PC-3 (cell line): ENCODE measurements at regions of chr3 and their contacts with region 1.

Region 1: GRCh38 chr3:143443851-143444331 is 324.3 kb downstream of the CHST2 start:
- DNase-seq: peak; percentile 94
- ATAC-seq: peak; percentile 99
- H3K4me3 ChIP-seq: peak overlapping the region; percentile 22; the same call in 1 of the 2 replicates
- H3K27ac ChIP-seq: peak overlapping the region; percentile 92
- H3K4me1 ChIP-seq: peaks cover 26% of the 10 kb centered on the region
- H3K27me3 ChIP-seq: no peaks in the 10 kb centered on the region
- CTCF ChIP-seq: no peak

Region 2: DNA sequence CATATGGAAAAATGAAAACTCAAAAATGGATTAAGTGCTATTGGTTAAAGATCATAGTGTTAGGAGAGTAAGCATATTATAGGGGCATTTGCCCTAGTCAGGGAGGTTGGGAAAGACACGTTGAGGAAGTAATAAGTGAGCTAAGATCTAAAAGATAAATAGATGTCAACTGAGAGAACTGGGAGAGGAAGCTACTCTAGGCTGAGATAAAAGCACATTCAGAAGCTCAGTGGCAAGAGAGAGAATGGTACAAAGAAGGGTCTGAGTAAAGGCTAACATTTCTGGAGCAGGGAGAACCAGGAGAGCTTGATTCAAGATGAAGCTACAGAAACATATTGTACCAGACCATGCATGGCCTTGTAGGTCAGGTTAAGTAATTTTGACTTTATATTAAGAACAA is 656.2 kb before region 1 on chr3:
- CTCF ChIA-PET with region 1: no interaction called
- POLR2A ChIA-PET with region 1: no interaction called
- intact Hi-C with region 1: no loop called
- DNase-seq: no peak
- ATAC-seq: no peak
- H3K4me3 ChIP-seq: no peak overlapping the region
- H3K27ac ChIP-seq: no peak overlapping the region
- H3K4me1 ChIP-seq: peaks cover 5% of the 10 kb centered on the region; the same call in 1 of the 2 replicates
- H3K27me3 ChIP-seq: no peaks in the 10 kb centered on the region
- CTCF ChIP-seq: no peak

Region 3: GRCh38 chr3:143135150-143135549 is 308.7 kb before region 1 on chr3:
- CTCF ChIA-PET with region 1: no interaction called
- POLR2A ChIA-PET with region 1: no interaction called
- intact Hi-C with region 1: loop called (anchors 5 kb)
- DNase-seq: peak; percentile 87
- ATAC-seq: peak; percentile 90
- H3K4me3 ChIP-seq: no peak overlapping the region
- H3K27ac ChIP-seq: peak overlapping the region; percentile 36
- H3K4me1 ChIP-seq: peaks cover 27% of the 10 kb centered on the region
- H3K27me3 ChIP-seq: no peaks in the 10 kb centered on the region
- CTCF ChIP-seq: 0 out of 2 replicates have a peak, but pooled peaks have one; percentile 14

Region 4: DNA sequence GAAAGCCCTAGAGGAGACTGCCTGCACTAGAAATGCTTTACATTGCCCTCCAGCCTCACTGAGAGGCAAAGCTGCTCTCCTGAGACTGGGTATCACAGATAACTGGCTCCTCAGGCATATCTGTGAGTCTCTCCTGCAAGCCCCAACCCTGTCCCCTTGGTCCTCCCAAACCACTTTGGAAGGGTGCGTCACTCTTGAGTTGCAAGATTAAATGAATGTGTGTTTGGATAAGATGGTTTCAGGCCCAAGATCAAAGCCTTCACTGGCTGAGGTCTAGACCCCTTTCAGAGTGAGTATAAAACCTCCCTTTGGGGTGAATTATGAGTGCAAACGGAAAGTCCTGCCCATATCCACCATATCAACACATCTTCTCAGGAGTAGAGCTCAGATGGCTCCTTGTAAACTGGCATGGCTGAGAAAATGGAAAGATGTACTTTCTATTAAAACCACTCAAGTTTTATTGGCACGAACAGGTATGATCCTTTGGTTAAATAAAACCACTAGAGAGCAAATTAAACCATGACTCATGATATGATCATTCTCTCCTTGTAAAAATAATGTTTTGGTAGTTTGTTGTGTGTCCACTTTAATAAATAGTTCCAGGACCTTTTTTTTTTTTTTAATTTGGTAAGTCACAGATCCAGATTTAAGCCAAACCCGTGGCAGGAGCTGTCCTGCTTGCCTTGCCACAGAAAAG is 160.3 kb before region 1 on chr3:
- CTCF ChIA-PET with region 1: no interaction called
- POLR2A ChIA-PET with region 1: interaction called, 19 read pairs
- intact Hi-C with region 1: no loop called
- DNase-seq: peak; percentile 89
- ATAC-seq: peak; percentile 91
- H3K4me3 ChIP-seq: no peak overlapping the region
- H3K27ac ChIP-seq: peak overlapping the region; percentile 67
- H3K4me1 ChIP-seq: peaks cover 16% of the 10 kb centered on the region
- H3K27me3 ChIP-seq: no peaks in the 10 kb centered on the region
- CTCF ChIP-seq: no peak

Region 5: GRCh38 chr3:143329567-143330211 is 114.2 kb before region 1 on chr3:
- CTCF ChIA-PET with region 1: no interaction called
- POLR2A ChIA-PET with region 1: no interaction called
- intact Hi-C with region 1: loop called (anchors 5 kb)
- DNase-seq: no peak
- ATAC-seq: no peak
- H3K4me3 ChIP-seq: no peak overlapping the region
- H3K27ac ChIP-seq: no peak overlapping the region
- H3K4me1 ChIP-seq: peaks cover 33% of the 10 kb centered on the region
- H3K27me3 ChIP-seq: no peaks in the 10 kb centered on the region
- CTCF ChIP-seq: no peak

Region 6: DNA sequence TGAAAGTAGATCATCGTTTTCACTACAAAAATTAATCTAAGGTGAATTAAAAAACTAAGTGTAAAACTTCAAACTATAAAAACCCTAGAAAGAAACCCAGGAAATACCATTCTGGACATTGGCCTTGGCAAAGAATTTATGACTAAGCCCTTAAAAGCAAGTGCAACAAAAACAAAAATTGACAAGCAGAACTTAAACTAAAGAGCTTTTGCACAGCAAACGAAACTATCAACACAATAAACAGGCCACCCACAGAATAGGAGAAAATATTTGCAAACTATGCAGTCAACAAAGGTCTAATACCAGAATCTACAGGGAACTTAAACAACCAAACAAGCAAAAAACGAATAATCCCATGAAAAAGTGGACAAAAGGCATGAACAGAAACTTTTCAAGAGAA is 22.3 kb before region 1 on chr3:
- CTCF ChIA-PET with region 1: no interaction called
- POLR2A ChIA-PET with region 1: no interaction called
- intact Hi-C with region 1: no loop called
- DNase-seq: no peak
- ATAC-seq: no peak
- H3K4me3 ChIP-seq: no peak overlapping the region
- H3K27ac ChIP-seq: no peak overlapping the region
- H3K4me1 ChIP-seq: no peaks in the 10 kb centered on the region
- H3K27me3 ChIP-seq: no peaks in the 10 kb centered on the region
- CTCF ChIP-seq: no peak

Region 7: DNA sequence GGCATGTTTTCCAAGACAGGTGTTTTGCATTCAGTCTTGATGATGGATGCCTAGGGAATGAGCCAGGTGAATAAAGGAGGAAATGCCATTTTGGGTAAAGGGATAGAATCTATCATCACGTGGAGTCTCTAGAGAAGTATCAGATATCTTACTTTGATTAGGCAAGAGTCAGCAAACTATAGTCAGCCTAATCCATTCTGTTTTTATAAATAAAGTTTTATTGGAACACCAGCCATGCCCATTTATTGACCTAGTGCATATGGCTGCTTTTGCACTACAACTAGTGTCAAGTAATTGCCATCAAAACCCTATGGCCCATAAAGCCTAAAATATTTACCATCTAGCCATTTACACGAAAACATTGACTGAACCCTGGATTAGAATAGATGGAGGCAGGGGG is 173.2 kb after region 1 on chr3:
- CTCF ChIA-PET with region 1: no interaction called
- POLR2A ChIA-PET with region 1: no interaction called
- intact Hi-C with region 1: no loop called
- DNase-seq: no peak
- ATAC-seq: no peak
- H3K4me3 ChIP-seq: no peak overlapping the region
- H3K27ac ChIP-seq: no peak overlapping the region
- H3K4me1 ChIP-seq: no peaks in the 10 kb centered on the region
- H3K27me3 ChIP-seq: no peaks in the 10 kb centered on the region
- CTCF ChIP-seq: no peak